T-cell (primary cell): ENCODE measurements at regions of chr7 and their contacts with region 1.

Region 1: DNA sequence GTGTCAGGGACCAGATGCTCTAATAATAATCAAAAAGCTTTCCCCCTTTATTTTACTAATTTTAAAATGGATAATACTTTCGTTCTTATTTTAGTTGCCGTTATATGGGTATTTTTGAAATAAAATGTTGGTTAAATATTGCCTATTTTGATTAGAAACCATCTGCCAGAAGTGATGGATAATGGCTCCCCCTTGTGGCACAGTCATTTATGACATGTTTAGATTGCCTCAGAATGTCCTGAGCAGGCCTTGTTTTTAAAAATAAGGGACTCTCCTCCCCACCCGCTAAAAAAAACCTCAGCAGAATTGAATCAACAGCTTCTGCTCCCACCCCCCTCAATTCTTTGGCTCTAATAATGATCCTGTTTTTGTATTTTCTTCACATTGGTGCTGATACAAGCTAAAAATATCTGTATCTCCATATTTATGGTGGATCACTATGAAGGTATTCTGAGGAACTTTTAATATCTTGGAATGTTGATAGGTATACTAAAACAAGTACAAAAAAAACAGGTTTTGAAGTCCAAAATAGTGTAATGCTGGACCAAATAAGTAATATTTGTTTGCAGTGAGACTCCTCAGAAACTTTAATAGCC is 38.8 kb downstream of the TMEM60 start:
- DNase-seq: peak in 34 of 35 experiments; percentile 16 to 91 (median 57)
- ATAC-seq: peak; percentile 59 to 79 (median 67)
- H3K4me3 ChIP-seq: no peak overlapping the region
- H3K4me3 Mint-ChIP-seq: no peak overlapping the region
- H3K27ac ChIP-seq: no peak overlapping the region
- H3K27ac Mint-ChIP-seq: no peak overlapping the region
- H3K4me1 ChIP-seq: peaks cover 0 to 2% of the 10 kb centered on the region in 2 experiments
- H3K4me1 Mint-ChIP-seq: peaks cover 39 to 53% (median 45%) of the 10 kb centered on the region in 3 donors
- H3K27me3 ChIP-seq: no peaks in the 10 kb centered on the region
- H3K27me3 Mint-ChIP-seq: no peaks in the 10 kb centered on the region

Region 2: GRCh38 chr7:77657427-77658224 is 101.8 kb before region 1 on chr7:
- CTCF ChIA-PET with region 1: interaction called, 21 to 54 read pairs
- POLR2A ChIA-PET with region 1: interaction called in 1 of 2 experiments, 5 read pairs
- DNase-seq: peak in 8 of 35 experiments; percentile 0 to 65 (median 4)
- ATAC-seq: peak; percentile 40 to 60 (median 58)
- H3K4me3 ChIP-seq: no peak overlapping the region
- H3K4me3 Mint-ChIP-seq: no peak overlapping the region
- H3K27ac ChIP-seq: no peak overlapping the region
- H3K27ac Mint-ChIP-seq: no peak overlapping the region
- H3K4me1 ChIP-seq: no peaks in the 10 kb centered on the region
- H3K4me1 Mint-ChIP-seq: no peaks in the 10 kb centered on the region
- H3K27me3 ChIP-seq: no peaks in the 10 kb centered on the region
- H3K27me3 Mint-ChIP-seq: no peaks in the 10 kb centered on the region

Region 3: DNA sequence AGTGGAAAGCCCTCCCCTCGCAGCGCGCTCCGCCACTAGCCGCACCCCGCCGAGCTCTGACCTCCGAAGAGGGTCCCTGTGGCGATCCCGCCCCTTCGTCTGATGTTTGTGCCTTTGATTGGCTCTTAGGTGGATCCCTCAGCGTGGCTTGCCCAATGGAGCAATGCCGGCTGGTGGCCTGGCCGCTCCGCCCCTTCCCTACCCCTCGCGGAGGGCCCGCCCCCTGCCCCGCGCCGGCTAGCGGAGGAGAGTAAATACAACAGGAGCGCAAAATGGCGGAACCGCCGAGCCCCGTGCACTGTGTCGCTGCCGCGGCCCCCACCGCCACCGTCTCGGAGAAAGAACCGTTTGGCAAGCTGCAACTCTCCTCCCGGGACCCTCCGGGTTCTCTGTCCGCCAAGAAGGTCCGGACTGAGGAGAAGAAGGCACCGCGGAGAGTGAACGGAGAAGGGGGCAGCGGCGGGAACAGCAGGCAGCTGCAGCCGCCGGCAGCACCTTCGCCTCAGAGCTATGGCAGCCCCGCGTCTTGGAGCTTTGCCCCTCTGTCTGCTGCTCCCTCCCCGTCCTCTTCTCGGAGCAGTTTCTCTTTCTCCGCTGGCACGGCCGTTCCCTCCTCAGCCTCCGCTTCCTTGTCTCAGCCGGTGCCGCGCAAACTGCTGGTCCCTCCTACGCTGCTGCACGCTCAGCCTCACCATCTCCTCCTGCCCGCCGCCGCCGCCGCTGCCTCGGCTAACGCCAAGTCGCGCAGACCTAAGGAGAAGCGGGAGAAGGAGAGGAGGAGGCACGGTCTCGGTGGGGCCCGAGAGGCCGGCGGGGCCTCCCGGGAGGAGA is 63.0 kb before region 1 on chr7 and contains the start of gene RSBN1L:
- CTCF ChIA-PET with region 1: interaction called, 4 read pairs
- POLR2A ChIA-PET with region 1: interaction called in 1 of 2 experiments, 10 read pairs
- DNase-seq: peak; percentile 95 to 99 (median 98)
- ATAC-seq: peak; percentile 94 to 95 (median 95)
- H3K4me3 ChIP-seq: peak within 1 kb of the TSS; percentile 98 to 99
- H3K4me3 Mint-ChIP-seq: peak within 1 kb of the TSS; percentile 91 to 99 (median 96)
- H3K27ac ChIP-seq: peak within 1 kb of the TSS; percentile 92
- H3K27ac Mint-ChIP-seq: peak within 1 kb of the TSS; percentile 95
- H3K4me1 ChIP-seq: peaks cover 21 to 22% of the 10 kb centered on the region in 2 experiments
- H3K4me1 Mint-ChIP-seq: peaks cover 51 to 67% (median 61%) of the 10 kb centered on the region in 3 donors
- H3K27me3 ChIP-seq: no peaks in the 10 kb centered on the region
- H3K27me3 Mint-ChIP-seq: no peaks in the 10 kb centered on the region
- total RNA-seq, gene RSBN1L: 27.1 to 35.9 (median 32.4) TPM

Region 4: DNA sequence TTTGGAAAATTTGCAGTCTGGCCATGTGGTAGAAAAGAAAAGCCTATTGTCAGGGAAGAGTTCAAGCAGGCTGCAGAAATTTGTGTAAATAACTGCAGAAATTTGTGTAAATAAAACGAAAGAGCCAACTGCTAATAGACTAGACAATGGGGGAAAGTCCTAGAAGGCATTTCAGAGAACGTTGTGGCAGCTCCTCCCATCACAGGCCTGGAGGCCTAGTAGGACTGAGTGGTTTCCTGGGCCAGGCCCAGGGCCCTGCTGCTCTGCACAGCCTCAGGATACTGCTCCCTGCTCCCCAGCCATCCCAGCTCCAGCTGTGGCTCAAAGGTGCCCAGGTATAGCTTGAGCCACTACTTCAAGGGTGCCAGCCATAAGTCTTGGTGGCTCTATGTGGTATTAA is 12.2 kb before region 1 on chr7:
- CTCF ChIA-PET with region 1: interaction called, 6 to 10 read pairs
- POLR2A ChIA-PET with region 1: no interaction called
- DNase-seq: no peak
- ATAC-seq: no peak
- H3K4me3 ChIP-seq: no peak overlapping the region
- H3K4me3 Mint-ChIP-seq: no peak overlapping the region
- H3K27ac ChIP-seq: no peak overlapping the region
- H3K27ac Mint-ChIP-seq: no peak overlapping the region
- H3K4me1 ChIP-seq: peaks cover 5 to 10% of the 10 kb centered on the region in 2 experiments
- H3K4me1 Mint-ChIP-seq: peaks cover 53 to 55% (median 55%) of the 10 kb centered on the region in 3 donors
- H3K27me3 ChIP-seq: no peaks in the 10 kb centered on the region
- H3K27me3 Mint-ChIP-seq: no peaks in the 10 kb centered on the region

Region 5: GRCh38 chr7:78247910-78248689 is 488.7 kb after region 1 on chr7:
- CTCF ChIA-PET with region 1: no interaction called
- POLR2A ChIA-PET with region 1: no interaction called
- DNase-seq: no peak
- ATAC-seq: no peak
- H3K4me3 ChIP-seq: no peak overlapping the region
- H3K4me3 Mint-ChIP-seq: no peak overlapping the region
- H3K27ac ChIP-seq: no peak overlapping the region
- H3K27ac Mint-ChIP-seq: no peak overlapping the region
- H3K4me1 ChIP-seq: no peaks in the 10 kb centered on the region
- H3K4me1 Mint-ChIP-seq: no peaks in the 10 kb centered on the region
- H3K27me3 ChIP-seq: peaks cover 0 to 8% of the 10 kb centered on the region in 2 experiments
- H3K27me3 Mint-ChIP-seq: no peaks in the 10 kb centered on the region